ENCODE measurements at regions of chr17 and their contacts with region 1.

Region 1: DNA sequence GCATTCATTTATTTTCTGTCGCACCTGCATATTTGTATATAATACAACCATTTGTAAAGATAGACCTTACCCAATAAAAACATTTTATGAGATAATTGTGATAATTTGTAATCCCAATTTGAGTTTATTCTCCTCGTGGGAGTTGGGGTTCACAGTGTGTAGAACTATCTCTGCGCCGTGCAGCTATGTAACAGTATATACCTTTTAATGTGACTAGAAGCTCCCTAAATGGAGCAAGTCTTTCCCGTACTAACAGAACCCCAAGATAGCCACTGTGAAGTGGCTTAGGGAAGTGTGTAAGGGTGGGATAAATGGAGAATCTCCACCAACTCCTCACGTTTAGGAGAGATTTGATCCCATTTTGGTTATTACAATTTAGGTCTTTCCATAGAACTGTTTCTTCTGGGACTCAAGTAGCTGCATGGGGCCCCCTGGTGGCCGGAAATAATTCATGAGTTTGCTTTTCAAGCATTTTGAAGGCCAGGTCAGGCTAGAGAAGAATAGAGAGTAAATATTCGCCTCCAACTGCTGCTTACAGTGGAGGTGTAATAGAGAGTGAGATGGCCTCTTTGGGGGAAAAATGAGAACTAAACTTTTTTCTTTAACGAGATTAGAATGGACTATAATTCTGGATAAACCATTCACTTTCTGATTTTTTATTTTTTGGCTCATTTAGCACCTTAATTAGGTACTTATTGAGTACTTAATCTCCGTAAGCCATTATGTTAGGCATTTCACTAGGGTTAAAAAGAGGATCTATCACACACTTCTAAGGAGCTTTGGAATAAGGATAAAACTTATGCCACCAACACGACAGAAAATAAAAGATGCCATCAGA is 4.5 kb downstream of the TMEM100 start:
- DNase-seq: no peak
- H3K4me3 ChIP-seq: no peak overlapping the region
- H3K27me3 ChIP-seq: 0 out of 2 replicates have a peak, but pooled peaks cover 1% of the 10 kb centered on the region
- CTCF ChIP-seq: peak; percentile 78

Region 2: GRCh38 chr17:55699181-55699860 is 18.8 kb before region 1 on chr17:
- CTCF ChIA-PET with region 1: interaction called, 12 read pairs
- POLR2A ChIA-PET with region 1: no interaction called
- DNase-seq: no peak
- H3K4me3 ChIP-seq: no peak overlapping the region
- H3K27me3 ChIP-seq: no peaks in the 10 kb centered on the region
- CTCF ChIP-seq: no peak

Measured in BJ (cell line).